MCF 10A (cell line): ENCODE measurements at regions of chr10 and their contacts with region 1.

Region 1: DNA sequence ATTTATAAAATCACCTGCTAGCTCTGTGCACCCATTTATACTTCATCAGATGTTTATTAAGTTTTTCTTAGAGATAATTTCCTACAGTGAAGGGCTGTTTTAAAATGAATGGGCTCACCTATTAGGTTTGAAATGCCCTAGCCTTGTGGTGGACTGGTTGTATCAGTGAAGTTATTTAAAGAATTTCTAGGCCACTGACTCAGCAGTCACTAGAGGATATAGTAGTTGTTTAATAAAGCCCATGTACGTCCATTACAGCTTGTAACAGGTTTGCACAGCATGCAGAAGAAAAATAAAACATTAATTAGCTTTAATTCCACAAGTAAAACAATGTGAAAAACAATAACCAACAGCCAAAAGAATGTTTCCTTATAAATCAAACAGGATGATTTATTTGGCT is 128.0 kb downstream of the RSU1 start:
- DNase-seq: no peak
- H3K4me3 Mint-ChIP-seq: no peak overlapping the region
- H3K27ac Mint-ChIP-seq: no peak overlapping the region
- H3K4me1 Mint-ChIP-seq: no peaks in the 10 kb centered on the region
- H3K27me3 Mint-ChIP-seq: no peaks in the 10 kb centered on the region
- CTCF ChIP-seq: no peak

Region 2: DNA sequence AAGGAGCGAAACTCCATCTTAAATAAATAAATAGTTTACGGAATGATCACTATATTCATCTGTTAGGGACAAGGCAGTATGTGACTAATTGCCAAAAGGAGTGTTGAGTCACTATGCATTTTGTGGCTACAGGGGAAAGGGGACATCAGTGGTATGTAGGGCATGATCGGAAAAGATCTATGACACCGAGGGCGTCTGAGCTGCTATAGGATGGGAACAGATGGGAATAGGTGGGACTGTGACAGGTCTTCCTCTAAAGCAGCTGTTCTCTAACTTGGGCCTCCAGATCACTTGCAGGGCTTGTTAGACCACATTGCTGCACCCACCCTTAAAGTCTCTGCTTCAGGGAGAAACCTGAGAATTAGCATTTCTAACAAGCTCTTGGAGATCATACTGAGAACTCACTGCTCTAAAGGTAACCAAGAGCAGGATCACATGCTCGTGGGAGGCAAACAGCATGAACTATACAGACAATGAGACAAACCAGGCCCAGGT is 904.5 kb before region 1 on chr10:
- CTCF ChIA-PET with region 1: no interaction called
- POLR2A ChIA-PET with region 1: no interaction called
- intact Hi-C with region 1: no loop called
- DNase-seq: no peak
- H3K4me3 Mint-ChIP-seq: no peak overlapping the region
- H3K27ac Mint-ChIP-seq: no peak overlapping the region
- H3K4me1 Mint-ChIP-seq: no peaks in the 10 kb centered on the region
- H3K27me3 Mint-ChIP-seq: no peaks in the 10 kb centered on the region
- CTCF ChIP-seq: no peak

Region 3: GRCh38 chr10:16639471-16639870 is 49.8 kb before region 1 on chr10:
- CTCF ChIA-PET with region 1: interaction called, 11 read pairs
- POLR2A ChIA-PET with region 1: no interaction called
- intact Hi-C with region 1: no loop called
- DNase-seq: no peak
- H3K4me3 Mint-ChIP-seq: no peak overlapping the region
- H3K27ac Mint-ChIP-seq: no peak overlapping the region
- H3K4me1 Mint-ChIP-seq: peaks cover 3% of the 10 kb centered on the region
- H3K27me3 Mint-ChIP-seq: no peaks in the 10 kb centered on the region
- CTCF ChIP-seq: no peak

Region 4: GRCh38 chr10:16653224-16653623 is 36.0 kb before region 1 on chr10:
- CTCF ChIA-PET with region 1: no interaction called
- POLR2A ChIA-PET with region 1: no interaction called
- intact Hi-C with region 1: no loop called
- DNase-seq: no peak
- H3K4me3 Mint-ChIP-seq: no peak overlapping the region
- H3K27ac Mint-ChIP-seq: no peak overlapping the region
- H3K4me1 Mint-ChIP-seq: peaks cover 7% of the 10 kb centered on the region
- H3K27me3 Mint-ChIP-seq: no peaks in the 10 kb centered on the region
- CTCF ChIP-seq: no peak

Region 5: DNA sequence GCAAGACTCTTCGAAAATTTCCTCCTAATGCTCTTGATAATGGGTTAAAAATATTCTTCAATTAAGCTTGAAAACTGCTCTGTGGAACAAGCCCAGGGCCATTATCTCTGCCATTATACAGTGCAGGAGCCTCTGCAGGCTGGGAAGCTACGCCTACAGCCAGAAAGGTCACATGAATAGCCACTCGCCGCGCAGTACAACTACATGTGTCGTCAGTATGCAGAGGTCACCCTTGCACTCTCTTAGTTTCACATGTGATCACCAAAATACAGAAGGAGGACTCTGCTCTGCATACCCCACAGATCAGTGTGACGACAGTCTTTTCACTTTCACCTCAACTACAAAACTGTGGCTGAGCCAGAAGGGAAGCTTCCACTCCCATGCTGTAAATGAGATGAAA is 25.8 kb before region 1 on chr10:
- CTCF ChIA-PET with region 1: no interaction called
- POLR2A ChIA-PET with region 1: no interaction called
- intact Hi-C with region 1: no loop called
- DNase-seq: no peak
- H3K4me3 Mint-ChIP-seq: no peak overlapping the region
- H3K27ac Mint-ChIP-seq: no peak overlapping the region
- H3K4me1 Mint-ChIP-seq: no peaks in the 10 kb centered on the region
- H3K27me3 Mint-ChIP-seq: no peaks in the 10 kb centered on the region
- CTCF ChIP-seq: no peak